Activated CD4-positive, alpha-beta memory T cell treated with anti-CD3 and anti-CD28 coated beads for 36 hours (primary cell): ENCODE measurements at regions of chr20 and their contacts with region 1.

Region 1: GRCh38 chr20:44217342-44218092 is 6.9 kb upstream of the OSER1 start:
- DNase-seq: peak; percentile 76
- H3K4me3 Mint-ChIP-seq: peak overlapping the region; percentile 66
- H3K27ac Mint-ChIP-seq: peak overlapping the region; percentile 68
- H3K4me1 Mint-ChIP-seq: peaks cover 47% of the 10 kb centered on the region
- H3K27me3 Mint-ChIP-seq: no peaks in the 10 kb centered on the region

Region 2: DNA sequence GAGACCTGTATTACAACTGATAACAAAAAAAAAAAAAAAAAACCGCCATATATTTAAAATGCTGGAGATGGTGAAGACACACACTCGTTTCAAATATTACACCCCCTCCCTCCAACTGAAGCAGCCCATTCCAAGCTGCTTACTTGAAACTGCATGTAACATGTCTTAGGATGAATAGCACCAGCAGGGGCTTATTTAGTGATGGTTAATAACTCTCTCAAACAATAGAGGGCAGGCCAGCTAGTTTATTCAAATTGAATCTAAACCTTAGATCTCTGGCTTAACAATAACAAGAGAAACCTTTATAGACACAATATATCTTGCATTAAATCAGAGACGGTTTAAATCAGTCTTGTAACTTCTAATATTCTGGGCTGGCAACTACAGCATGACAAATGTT is 21.2 kb before region 1 on chr20:
- CTCF ChIA-PET with region 1: interaction called, 12 read pairs
- POLR2A ChIA-PET with region 1: interaction called, 3 read pairs
- intact Hi-C with region 1: no loop called
- DNase-seq: no peak
- H3K4me3 Mint-ChIP-seq: no peak overlapping the region
- H3K27ac Mint-ChIP-seq: no peak overlapping the region
- H3K4me1 Mint-ChIP-seq: peaks cover 18% of the 10 kb centered on the region
- H3K27me3 Mint-ChIP-seq: no peaks in the 10 kb centered on the region

Region 3: GRCh38 chr20:44310664-44311639 is 93.4 kb after region 1 on chr20 and contains the start of gene FITM2:
- CTCF ChIA-PET with region 1: interaction called, 453 read pairs
- POLR2A ChIA-PET with region 1: interaction called, 21 read pairs
- intact Hi-C with region 1: loop called (anchors 1 kb)
- DNase-seq: peak; percentile 98
- H3K4me3 Mint-ChIP-seq: peak within 1 kb of the TSS; percentile 87
- H3K27ac Mint-ChIP-seq: peak within 1 kb of the TSS; percentile 76
- H3K4me1 Mint-ChIP-seq: peaks cover 18% of the 10 kb centered on the region
- H3K27me3 Mint-ChIP-seq: no peaks in the 10 kb centered on the region
- total RNA-seq, gene FITM2: 1.8 to 1.9 TPM

Region 4: GRCh38 chr20:44388466-44389023 is 171.0 kb after region 1 on chr20:
- CTCF ChIA-PET with region 1: interaction called, 112 read pairs
- POLR2A ChIA-PET with region 1: no interaction called
- intact Hi-C with region 1: loop called (anchors 1 kb)
- DNase-seq: peak; percentile 84
- H3K4me3 Mint-ChIP-seq: no peak overlapping the region
- H3K27ac Mint-ChIP-seq: no peak overlapping the region
- H3K4me1 Mint-ChIP-seq: peaks cover 2% of the 10 kb centered on the region
- H3K27me3 Mint-ChIP-seq: peaks cover 14% of the 10 kb centered on the region

Region 5: GRCh38 chr20:44651684-44652423 is 434.3 kb after region 1 on chr20 and contains the start of gene ADA:
- CTCF ChIA-PET with region 1: interaction called, 6 read pairs
- POLR2A ChIA-PET with region 1: no interaction called
- intact Hi-C with region 1: loop called (anchors 5 kb)
- DNase-seq: peak; percentile 53
- H3K4me3 Mint-ChIP-seq: peak within 1 kb of the TSS; percentile 85
- H3K27ac Mint-ChIP-seq: peak within 1 kb of the TSS; percentile 79
- H3K4me1 Mint-ChIP-seq: peaks cover 40% of the 10 kb centered on the region
- H3K27me3 Mint-ChIP-seq: no peaks in the 10 kb centered on the region
- total RNA-seq, gene ADA: 35.7 to 38.0 TPM